Activated CD4-positive, alpha-beta memory T cell treated with anti-CD3 and anti-CD28 coated beads for 36 hours (primary cell): ENCODE measurements at regions of chr9 and their contacts with region 1.

Region 1: DNA sequence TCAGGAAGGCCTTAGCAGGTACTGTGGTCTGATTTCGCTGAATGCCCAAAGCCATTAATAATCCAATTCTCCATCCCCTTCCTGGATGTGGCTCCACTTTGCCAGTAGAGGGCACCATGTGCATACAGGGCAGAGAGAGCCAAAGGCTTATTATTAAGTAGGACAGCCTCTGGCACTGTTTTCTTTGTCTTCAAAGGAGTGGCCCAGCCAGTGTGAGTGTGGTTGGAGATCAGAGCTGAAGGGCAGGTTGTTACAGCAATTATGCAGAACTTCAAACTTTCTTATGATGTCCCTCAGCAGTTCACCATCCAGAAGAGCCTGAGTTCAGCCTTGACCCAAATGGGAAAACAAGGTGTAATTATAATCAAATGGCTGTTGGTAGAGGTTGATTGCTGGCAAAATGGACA is 38.6 kb upstream of the CEMIP2 start:
- DNase-seq: peak; percentile 69
- H3K4me3 Mint-ChIP-seq: no peak overlapping the region
- H3K27ac Mint-ChIP-seq: no peak overlapping the region
- H3K4me1 Mint-ChIP-seq: peaks cover 5% of the 10 kb centered on the region
- H3K27me3 Mint-ChIP-seq: no peaks in the 10 kb centered on the region

Region 2: DNA sequence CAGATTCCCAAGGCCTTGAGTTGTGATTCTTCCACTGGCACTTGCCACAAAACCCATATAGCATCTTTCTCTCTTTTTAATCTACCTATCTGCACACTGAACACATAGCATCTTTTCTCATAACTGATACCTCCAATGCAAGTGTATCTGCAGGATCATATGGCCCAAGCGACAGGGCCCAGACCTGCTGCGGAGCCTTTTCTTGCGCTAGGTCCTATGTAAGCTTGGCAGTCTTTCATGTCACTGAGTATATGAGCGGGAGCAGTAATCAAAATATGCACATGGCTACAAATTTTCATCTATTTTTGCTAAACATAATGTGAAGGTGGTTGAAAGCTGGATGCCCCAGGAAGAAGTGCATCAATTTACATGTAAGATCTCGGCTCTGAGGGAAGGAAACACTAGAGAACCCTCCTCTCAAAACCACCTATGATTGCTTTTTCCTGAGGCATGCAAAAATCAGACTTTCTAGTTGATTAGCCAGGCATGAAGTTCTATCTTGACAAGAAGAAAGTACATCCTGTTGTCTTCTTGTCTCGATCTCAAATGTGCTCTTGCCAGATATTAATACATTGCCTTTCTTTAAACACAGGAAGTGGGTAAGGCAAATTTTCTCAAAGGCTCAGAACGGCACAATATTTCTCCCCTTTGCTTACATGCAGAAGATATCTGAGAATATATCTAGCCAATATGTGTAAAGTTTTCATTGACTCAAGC is 11.6 kb before region 1 on chr9:
- CTCF ChIA-PET with region 1: interaction called, 18 read pairs
- POLR2A ChIA-PET with region 1: no interaction called
- intact Hi-C with region 1: loop called (anchors 1 kb)
- DNase-seq: no peak
- H3K4me3 Mint-ChIP-seq: peak overlapping the region; percentile 9
- H3K27ac Mint-ChIP-seq: peak overlapping the region; percentile 83
- H3K4me1 Mint-ChIP-seq: peaks cover 54% of the 10 kb centered on the region
- H3K27me3 Mint-ChIP-seq: no peaks in the 10 kb centered on the region

Region 3: GRCh38 chr9:71876106-71876505 is 69.2 kb after region 1 on chr9:
- CTCF ChIA-PET with region 1: no interaction called
- POLR2A ChIA-PET with region 1: no interaction called
- intact Hi-C with region 1: no loop called
- DNase-seq: no peak
- H3K4me3 Mint-ChIP-seq: no peak overlapping the region
- H3K27ac Mint-ChIP-seq: no peak overlapping the region
- H3K4me1 Mint-ChIP-seq: no peaks in the 10 kb centered on the region
- H3K27me3 Mint-ChIP-seq: no peaks in the 10 kb centered on the region

Region 4: DNA sequence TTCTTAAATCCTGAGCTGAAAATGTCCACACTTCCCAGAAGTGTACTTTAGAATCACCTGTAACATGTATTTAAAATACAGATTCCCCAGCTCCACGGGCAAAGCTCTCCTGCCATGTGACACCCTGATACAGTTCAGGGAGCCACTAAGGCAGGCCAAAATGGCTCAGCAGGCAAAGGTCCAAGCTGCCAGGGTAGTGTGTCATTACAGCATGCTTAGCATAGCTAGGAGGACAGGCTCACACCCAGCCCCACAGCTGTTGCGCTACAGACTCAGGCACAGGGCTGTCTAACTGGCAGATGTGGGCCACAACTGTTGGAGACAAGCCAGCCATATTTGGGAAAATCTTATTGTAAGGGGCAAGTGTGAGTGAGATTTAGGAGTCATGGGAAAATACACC is 177.5 kb after region 1 on chr9:
- CTCF ChIA-PET with region 1: no interaction called
- POLR2A ChIA-PET with region 1: no interaction called
- intact Hi-C with region 1: loop called (anchors 5 kb)
- DNase-seq: no peak
- H3K4me3 Mint-ChIP-seq: no peak overlapping the region
- H3K27ac Mint-ChIP-seq: no peak overlapping the region
- H3K4me1 Mint-ChIP-seq: no peaks in the 10 kb centered on the region
- H3K27me3 Mint-ChIP-seq: no peaks in the 10 kb centered on the region

Region 5: DNA sequence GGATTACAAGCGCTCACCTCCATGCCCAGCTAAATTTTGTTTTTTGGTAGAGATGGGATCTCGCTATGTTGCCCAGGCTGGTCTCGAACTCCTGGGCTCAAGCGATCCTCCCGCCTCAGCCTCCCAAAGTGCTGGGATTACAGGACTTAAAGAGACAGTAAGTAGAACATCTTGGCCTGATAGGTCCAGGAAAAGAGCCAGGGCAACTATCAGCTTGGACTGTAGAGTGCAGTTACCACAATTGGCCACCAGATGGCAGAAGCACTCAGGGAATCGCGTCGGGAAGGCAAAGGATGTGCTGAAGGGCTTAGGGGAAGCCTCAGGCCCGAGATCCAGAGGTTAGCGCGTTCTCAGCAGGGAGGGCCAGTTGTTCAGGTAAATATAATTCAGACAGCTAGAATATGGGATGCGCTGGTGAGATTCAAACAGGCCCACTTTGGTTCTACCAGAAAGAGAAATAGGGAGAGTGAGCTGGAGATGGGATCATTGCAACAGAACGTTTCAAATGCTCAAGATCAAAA is 232.0 kb after region 1 on chr9:
- CTCF ChIA-PET with region 1: interaction called, 15 read pairs
- POLR2A ChIA-PET with region 1: no interaction called
- intact Hi-C with region 1: no loop called
- DNase-seq: peak; percentile 80
- H3K4me3 Mint-ChIP-seq: no peak overlapping the region
- H3K27ac Mint-ChIP-seq: no peak overlapping the region
- H3K4me1 Mint-ChIP-seq: peaks cover 5% of the 10 kb centered on the region
- H3K27me3 Mint-ChIP-seq: peaks cover 4% of the 10 kb centered on the region

Region 6: DNA sequence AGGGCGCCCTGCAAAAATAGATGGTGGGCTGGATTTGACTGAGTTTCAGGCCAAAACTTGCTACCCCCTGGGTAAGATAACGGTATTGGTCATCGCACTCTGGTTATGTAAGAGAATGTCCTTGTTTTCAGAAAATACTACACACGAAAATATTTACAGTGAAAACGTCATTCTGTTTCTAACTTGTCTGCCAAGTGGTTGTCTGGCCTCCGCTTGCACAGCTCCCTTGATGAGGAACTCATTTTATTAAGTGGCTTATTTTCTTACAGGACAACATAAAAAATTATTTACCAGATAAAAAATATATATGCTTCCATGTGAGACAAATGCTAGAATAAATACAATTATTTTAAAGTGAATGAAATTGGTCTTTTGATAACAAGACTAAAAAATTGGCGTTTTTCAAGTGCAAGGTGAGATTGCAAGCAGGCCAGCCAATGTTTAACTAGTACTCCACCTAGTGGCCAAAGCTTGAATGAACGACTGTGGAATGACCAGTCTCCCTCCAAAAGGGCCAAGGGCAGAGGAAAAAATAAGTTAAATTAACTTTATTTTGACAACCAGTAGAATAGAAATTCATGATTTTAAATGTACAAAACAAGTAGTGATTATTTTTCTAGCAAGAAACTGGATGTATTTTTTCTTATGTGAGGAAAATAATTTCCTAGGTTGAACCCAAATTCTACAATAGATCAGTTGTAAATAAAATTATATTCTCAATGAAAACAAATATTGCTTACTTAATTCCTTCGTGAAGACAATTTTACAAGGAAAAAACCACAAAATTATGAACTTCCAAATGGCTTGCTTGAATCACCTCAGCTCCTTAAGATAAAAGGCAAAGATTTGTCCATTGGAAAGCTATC is 464.9 kb after region 1 on chr9:
- CTCF ChIA-PET with region 1: interaction called, 3 read pairs
- POLR2A ChIA-PET with region 1: no interaction called
- intact Hi-C with region 1: loop called (anchors 2 kb)
- DNase-seq: peak; percentile 42
- H3K4me3 Mint-ChIP-seq: no peak overlapping the region
- H3K27ac Mint-ChIP-seq: no peak overlapping the region
- H3K4me1 Mint-ChIP-seq: no peaks in the 10 kb centered on the region
- H3K27me3 Mint-ChIP-seq: no peaks in the 10 kb centered on the region